H1 (cell line): ENCODE measurements at regions of chr18 and their contacts with region 1.

Region 1: GRCh38 chr18:6731222-6731596 is 1.7 kb downstream of the ARHGAP28 start:
- DNase-seq: no peak
- H3K4me3 ChIP-seq: no peak overlapping the region
- H3K27ac ChIP-seq: no peak overlapping the region
- H3K4me1 ChIP-seq: peaks cover 4 to 18% (median 9%) of the 10 kb centered on the region in 4 experiments; a peak in 5 of 7 replicates
- H3K27me3 ChIP-seq: no peaks in the 10 kb centered on the region
- CTCF ChIP-seq: no peak
- EP300 ChIP-seq: no peak
- POLR2A ChIP-seq: no peak
- RAD21 ChIP-seq: no peak

Region 2: DNA sequence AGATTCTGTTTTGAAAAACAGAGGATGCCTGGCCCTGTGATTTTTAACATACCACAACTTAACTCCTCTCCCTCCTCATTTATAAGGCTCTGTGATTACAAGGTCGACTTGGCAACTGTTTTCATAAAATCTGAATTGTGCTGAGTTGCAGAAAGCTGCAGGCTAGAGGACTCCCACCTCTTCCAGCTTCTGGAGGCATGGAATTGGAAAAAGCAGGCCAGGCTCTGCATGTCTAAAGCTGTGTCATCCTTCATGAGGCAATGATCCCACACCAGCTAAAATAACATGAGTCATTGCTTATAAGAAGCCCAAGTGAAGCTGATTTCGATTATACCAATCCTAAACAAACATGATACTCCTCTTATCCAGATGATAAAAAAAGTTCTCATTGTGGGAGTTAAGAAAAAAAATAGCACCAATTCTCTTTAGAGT is 10.0 kb after region 1 on chr18:
- CTCF ChIA-PET with region 1: interaction called, 23 read pairs
- POLR2A ChIA-PET with region 1: interaction called, 4 read pairs
- DNase-seq: no peak
- H3K4me3 ChIP-seq: no peak overlapping the region
- H3K27ac ChIP-seq: no peak overlapping the region
- H3K4me1 ChIP-seq: peaks cover 0 to 9% (median 3%) of the 10 kb centered on the region in 4 experiments; a peak in 3 of 7 replicates
- H3K27me3 ChIP-seq: no peaks in the 10 kb centered on the region
- CTCF ChIP-seq: no peak
- EP300 ChIP-seq: no peak
- POLR2A ChIP-seq: no peak
- RAD21 ChIP-seq: no peak

Region 3: GRCh38 chr18:6795307-6795706 is 64.1 kb after region 1 on chr18:
- CTCF ChIA-PET with region 1: no interaction called
- POLR2A ChIA-PET with region 1: no interaction called
- DNase-seq: no peak
- H3K4me3 ChIP-seq: no peak overlapping the region
- H3K27ac ChIP-seq: no peak overlapping the region
- H3K4me1 ChIP-seq: peaks cover 0 to 4% (median 0%) of the 10 kb centered on the region in 4 experiments; a peak in 1 of 7 replicates
- H3K27me3 ChIP-seq: no peaks in the 10 kb centered on the region
- CTCF ChIP-seq: no peak
- EP300 ChIP-seq: no peak
- POLR2A ChIP-seq: no peak
- RAD21 ChIP-seq: no peak

Region 4: DNA sequence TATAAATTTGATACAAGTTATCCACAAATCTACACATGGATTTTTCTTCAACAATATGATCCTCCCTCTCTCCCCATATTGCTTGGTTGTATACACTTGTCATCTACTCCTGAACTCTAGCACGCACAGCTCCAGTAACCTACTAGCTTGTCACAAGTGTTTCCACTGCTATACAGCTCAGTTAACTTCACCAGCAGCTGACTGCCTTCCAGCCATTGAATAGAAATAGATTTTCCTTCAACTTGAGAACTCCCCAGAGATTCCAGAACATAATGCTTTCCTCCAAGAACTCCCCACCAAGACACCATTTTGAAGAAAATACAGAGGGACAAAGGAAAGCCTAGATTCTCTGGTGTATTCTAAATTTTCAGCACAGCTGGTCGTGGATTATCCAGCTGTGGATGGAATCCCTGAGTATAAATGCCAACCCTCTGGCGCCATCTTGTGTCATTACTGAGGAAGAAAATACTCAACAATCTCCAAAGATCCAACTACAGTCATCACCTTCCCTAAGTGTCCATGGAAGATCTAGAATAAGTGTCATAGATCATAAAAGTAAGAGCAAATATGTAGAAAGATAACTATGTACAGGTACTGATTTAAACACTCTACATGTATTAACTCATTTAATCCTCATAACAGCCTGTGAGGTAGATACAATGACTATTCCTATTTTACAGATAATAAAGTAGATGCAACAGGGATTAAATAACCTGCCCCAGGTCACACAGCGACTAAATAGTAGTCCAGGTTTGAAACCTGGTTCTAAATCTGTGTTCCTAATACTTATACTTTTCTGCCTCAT is 155.0 kb after region 1 on chr18:
- CTCF ChIA-PET with region 1: interaction called, 14 read pairs
- POLR2A ChIA-PET with region 1: interaction called, 3 read pairs
- DNase-seq: no peak
- H3K4me3 ChIP-seq: no peak overlapping the region
- H3K27ac ChIP-seq: no peak overlapping the region
- H3K4me1 ChIP-seq: peaks cover 0 to 5% (median 2%) of the 10 kb centered on the region in 4 experiments; a peak in 2 of 7 replicates
- H3K27me3 ChIP-seq: no peaks in the 10 kb centered on the region
- CTCF ChIP-seq: peak in 2 of 3 experiments; percentile 70 to 71; a peak in 3 of 4 replicates
- EP300 ChIP-seq: no peak
- POLR2A ChIP-seq: no peak
- RAD21 ChIP-seq: peak; percentile 96 to 97